ENCODE measurements at regions of chr18 and their contacts with region 1.

Region 1: DNA sequence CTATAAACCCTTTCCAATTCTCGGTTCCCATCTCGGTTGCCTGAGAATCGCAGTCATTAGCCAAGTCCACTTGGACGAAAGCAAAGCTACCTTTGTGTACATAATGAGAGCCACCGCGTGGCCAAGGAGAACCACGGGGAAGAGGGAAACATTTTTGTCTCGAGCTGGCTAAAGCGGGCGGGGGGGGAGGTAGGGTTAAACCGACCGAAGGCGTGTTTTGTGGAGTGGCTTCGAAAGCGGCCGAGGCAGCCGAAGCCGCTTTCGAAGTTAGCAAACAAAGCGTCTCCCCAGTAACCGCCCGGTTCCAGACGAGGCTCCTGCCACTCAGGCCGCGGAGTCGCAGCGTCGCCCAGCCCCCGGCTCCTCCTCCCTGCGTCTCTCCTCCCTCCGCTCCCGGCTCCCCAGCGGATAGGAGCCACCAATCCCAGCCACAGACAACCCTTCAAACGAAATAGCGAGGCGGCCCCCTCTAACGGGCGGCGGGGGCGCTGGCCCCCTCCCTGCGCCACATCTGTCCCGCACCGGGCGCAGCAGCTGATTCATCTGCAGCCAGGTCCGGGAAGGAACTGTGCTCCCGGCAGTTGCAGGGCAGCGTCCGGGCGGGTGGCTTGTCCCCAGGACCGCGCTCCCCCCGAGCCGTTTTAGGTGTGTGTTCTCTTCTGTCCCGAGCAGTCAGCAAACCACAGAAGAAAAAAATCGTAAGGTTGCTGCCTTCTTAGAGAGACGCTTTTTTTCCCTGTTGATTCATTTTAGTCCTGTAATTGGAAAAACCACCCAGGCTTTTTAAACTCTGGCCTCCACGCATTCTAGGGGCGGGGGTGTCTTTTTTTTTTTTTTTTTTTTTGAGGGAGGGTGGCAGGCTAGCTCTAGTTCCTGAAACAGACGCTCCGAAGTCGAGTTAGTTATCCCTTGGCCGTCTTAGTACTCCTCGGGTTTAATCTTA is 1.8 kb upstream of the TGIF1 start:
- DNase-seq: peak; percentile 77
- ATAC-seq: peak; percentile 45
- H3K4me3 Mint-ChIP-seq: peak overlapping the region; percentile 96
- H3K27ac Mint-ChIP-seq: peak overlapping the region; percentile 100
- H3K4me1 Mint-ChIP-seq: peaks cover 34% of the 10 kb centered on the region
- H3K27me3 Mint-ChIP-seq: no peaks in the 10 kb centered on the region
- CTCF ChIP-seq: no peak

Region 2: GRCh38 chr18:2655178-2655953 is 792.8 kb before region 1 on chr18 and contains the start of gene SMCHD1:
- CTCF ChIA-PET with region 1: no interaction called
- POLR2A ChIA-PET with region 1: interaction called, 4 read pairs
- intact Hi-C with region 1: loop called (anchors 2 kb)
- DNase-seq: peak; percentile 90
- ATAC-seq: peak; percentile 74
- H3K4me3 Mint-ChIP-seq: peak within 1 kb of the TSS; percentile 96
- H3K27ac Mint-ChIP-seq: peak within 1 kb of the TSS; percentile 98
- H3K4me1 Mint-ChIP-seq: peaks cover 44% of the 10 kb centered on the region
- H3K27me3 Mint-ChIP-seq: no peaks in the 10 kb centered on the region
- CTCF ChIP-seq: no peak
- total RNA-seq, gene SMCHD1: 111 and 144 TPM in 2 replicates

Region 3: GRCh38 chr18:2978646-2979045 is 469.5 kb before region 1 on chr18:
- CTCF ChIA-PET with region 1: no interaction called
- POLR2A ChIA-PET with region 1: no interaction called
- intact Hi-C with region 1: loop called (anchors 5 kb)
- DNase-seq: no peak
- ATAC-seq: peak; percentile 26
- H3K4me3 Mint-ChIP-seq: peak overlapping the region; percentile 52
- H3K27ac Mint-ChIP-seq: peak overlapping the region; percentile 94
- H3K4me1 Mint-ChIP-seq: peaks cover 77% of the 10 kb centered on the region
- H3K27me3 Mint-ChIP-seq: no peaks in the 10 kb centered on the region
- CTCF ChIP-seq: no peak

Region 4: GRCh38 chr18:3261371-3262246 is 186.6 kb before region 1 on chr18 and contains the start of gene MYL12B:
- CTCF ChIA-PET with region 1: no interaction called
- POLR2A ChIA-PET with region 1: interaction called, 14 read pairs
- intact Hi-C with region 1: loop called (anchors 5 kb)
- DNase-seq: peak; percentile 81
- ATAC-seq: peak; percentile 83
- H3K4me3 Mint-ChIP-seq: peak within 1 kb of the TSS; percentile 94
- H3K27ac Mint-ChIP-seq: peak within 1 kb of the TSS; percentile 97
- H3K4me1 Mint-ChIP-seq: peaks cover 80% of the 10 kb centered on the region
- H3K27me3 Mint-ChIP-seq: no peaks in the 10 kb centered on the region
- CTCF ChIP-seq: no peak
- total RNA-seq, gene MYL12B: 185 and 198 TPM in 2 replicates

Region 5: DNA sequence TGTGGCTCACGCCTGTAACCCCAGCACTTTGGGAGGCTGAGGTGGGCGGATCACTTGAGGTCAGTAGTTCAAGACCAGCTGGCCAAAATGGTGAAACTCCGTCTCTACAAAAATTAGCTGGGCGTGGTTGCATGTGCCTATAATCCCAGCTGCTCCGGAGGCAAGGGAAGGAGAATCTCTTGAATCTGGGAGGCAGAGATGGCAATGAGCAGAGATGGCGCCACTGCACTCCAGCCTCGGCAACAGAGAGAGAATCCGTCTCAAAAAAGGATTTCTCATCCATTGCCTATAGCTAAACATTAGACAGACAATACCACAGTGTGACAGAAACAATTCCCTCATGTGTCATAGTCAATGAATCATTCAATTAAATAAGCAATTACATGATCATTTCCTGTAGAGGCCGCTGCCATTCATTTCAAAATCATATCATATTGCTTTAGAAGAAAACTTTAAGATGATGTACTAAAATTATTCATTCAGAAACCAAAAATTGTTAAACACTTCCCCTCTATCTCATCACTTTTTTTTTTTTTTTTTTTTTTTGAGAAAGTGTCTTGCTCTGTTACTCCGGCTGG is 67.7 kb before region 1 on chr18:
- CTCF ChIA-PET with region 1: interaction called, 9 read pairs
- POLR2A ChIA-PET with region 1: interaction called, 54 read pairs
- intact Hi-C with region 1: loop called (anchors 1 kb)
- DNase-seq: no peak
- ATAC-seq: peak; percentile 66
- H3K4me3 Mint-ChIP-seq: no peak overlapping the region
- H3K27ac Mint-ChIP-seq: no peak overlapping the region
- H3K4me1 Mint-ChIP-seq: peaks cover 21% of the 10 kb centered on the region
- H3K27me3 Mint-ChIP-seq: no peaks in the 10 kb centered on the region
- CTCF ChIP-seq: no peak

Region 6: DNA sequence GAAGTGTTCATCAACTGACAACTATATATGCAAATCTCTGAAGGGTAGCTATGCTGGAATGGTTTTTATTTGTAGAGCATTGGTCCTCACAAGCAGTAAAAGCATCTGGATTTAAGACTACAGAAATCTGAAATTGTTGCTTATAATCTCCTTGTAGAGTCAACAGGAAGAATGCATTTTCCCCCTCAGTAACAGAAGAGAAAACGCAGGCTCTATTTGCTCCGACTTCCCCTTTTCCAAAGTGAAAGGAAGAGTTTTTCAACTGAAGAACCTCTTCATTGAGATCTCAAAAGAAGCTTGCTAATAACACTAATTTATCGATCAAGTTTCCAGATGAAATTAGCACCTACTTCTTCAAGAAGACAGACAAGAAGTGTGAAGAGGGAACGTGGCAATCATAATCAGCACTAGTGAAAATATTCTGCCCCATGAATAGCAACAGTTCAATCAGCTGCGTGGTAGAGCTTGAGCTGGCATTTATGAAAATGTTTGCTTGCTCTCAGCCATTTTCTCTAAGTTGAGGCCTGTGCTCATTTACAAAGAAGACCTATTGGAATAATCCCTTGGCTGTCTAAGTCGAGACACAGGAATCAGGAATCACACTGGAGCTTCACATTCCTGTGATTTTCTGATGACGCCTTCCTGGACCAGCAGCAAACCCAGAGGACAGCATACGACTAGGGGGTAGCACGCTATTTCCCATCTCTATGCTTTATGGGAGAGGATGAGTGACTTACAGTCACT is 45.5 kb after region 1 on chr18:
- CTCF ChIA-PET with region 1: interaction called, 15 read pairs
- POLR2A ChIA-PET with region 1: interaction called, 14 read pairs
- intact Hi-C with region 1: loop called (anchors 2 kb)
- DNase-seq: no peak
- ATAC-seq: peak; percentile 35
- H3K4me3 Mint-ChIP-seq: peak overlapping the region; percentile 83
- H3K27ac Mint-ChIP-seq: peak overlapping the region; percentile 88
- H3K4me1 Mint-ChIP-seq: peaks cover 43% of the 10 kb centered on the region
- H3K27me3 Mint-ChIP-seq: peaks cover 2% of the 10 kb centered on the region
- CTCF ChIP-seq: no peak

Region 7: GRCh38 chr18:3665780-3666525 is 217.8 kb after region 1 on chr18:
- CTCF ChIA-PET with region 1: interaction called, 60 read pairs
- POLR2A ChIA-PET with region 1: interaction called, 26 read pairs
- intact Hi-C with region 1: no loop called
- DNase-seq: peak; percentile 51
- ATAC-seq: peak; percentile 84
- H3K4me3 Mint-ChIP-seq: no peak overlapping the region
- H3K27ac Mint-ChIP-seq: no peak overlapping the region
- H3K4me1 Mint-ChIP-seq: peaks cover 21% of the 10 kb centered on the region
- H3K27me3 Mint-ChIP-seq: no peaks in the 10 kb centered on the region
- CTCF ChIP-seq: peak; percentile 83